Activated CD4-positive, alpha-beta T cell treated with anti-CD3 and anti-CD28 coated beads for 36 hours (primary cell): ENCODE measurements at regions of chr4 and their contacts with region 1.

Region 1: GRCh38 chr4:37977471-37978247 is 17.5 kb downstream of the PTTG2 start:
- DNase-seq: peak; percentile 84
- ATAC-seq: peak; percentile 79
- H3K4me3 Mint-ChIP-seq: peak overlapping the region; percentile 80
- H3K27ac Mint-ChIP-seq: peak overlapping the region; percentile 75
- H3K4me1 Mint-ChIP-seq: peaks cover 42% of the 10 kb centered on the region
- H3K27me3 Mint-ChIP-seq: no peaks in the 10 kb centered on the region

Region 2: DNA sequence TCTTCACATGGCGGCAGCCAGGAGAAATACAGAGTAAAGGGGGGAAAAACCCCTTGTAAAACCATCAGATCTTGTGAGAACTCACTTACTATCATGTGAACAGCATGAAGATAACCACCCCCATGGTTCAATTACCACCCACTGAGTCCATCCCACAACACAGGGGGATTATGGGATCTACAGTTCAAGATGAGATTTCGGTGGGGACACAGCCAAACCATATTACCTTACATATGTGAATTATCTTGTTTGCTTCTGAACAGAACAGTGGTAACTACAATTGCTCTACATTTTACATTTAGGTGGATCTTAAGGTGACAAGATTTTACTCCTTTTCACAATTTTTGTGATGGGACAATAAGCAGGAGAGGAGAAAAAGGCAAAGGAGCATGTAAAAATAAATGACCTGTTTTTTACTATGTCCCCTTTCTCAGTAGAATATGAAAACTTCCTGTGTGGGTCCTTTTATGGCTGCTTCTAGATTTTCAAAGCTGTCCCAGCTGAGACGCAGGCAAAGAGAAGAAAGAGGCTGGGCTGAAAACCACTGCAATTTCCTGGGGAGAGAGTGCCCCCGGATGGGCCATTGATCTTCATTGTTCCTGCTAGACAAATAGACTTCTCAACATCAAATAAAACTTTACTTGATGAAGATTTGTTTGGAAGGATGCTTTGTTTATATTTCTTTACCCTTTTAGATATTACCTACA is 197.1 kb before region 1 on chr4:
- CTCF ChIA-PET with region 1: no interaction called
- POLR2A ChIA-PET with region 1: no interaction called
- intact Hi-C with region 1: no loop called
- DNase-seq: peak; percentile 47
- ATAC-seq: peak; percentile 44
- H3K4me3 Mint-ChIP-seq: no peak overlapping the region
- H3K27ac Mint-ChIP-seq: peak overlapping the region; percentile 53
- H3K4me1 Mint-ChIP-seq: peaks cover 18% of the 10 kb centered on the region
- H3K27me3 Mint-ChIP-seq: no peaks in the 10 kb centered on the region

Region 3: GRCh38 chr4:37826295-37827029 is 151.2 kb before region 1 on chr4 and contains the start of gene PGM2:
- CTCF ChIA-PET with region 1: no interaction called
- POLR2A ChIA-PET with region 1: no interaction called
- intact Hi-C with region 1: loop called (anchors 1 kb)
- DNase-seq: peak; percentile 95
- ATAC-seq: peak; percentile 96
- H3K4me3 Mint-ChIP-seq: peak within 1 kb of the TSS; percentile 97
- H3K27ac Mint-ChIP-seq: peak within 1 kb of the TSS; percentile 93
- H3K4me1 Mint-ChIP-seq: peaks cover 29% of the 10 kb centered on the region
- H3K27me3 Mint-ChIP-seq: no peaks in the 10 kb centered on the region
- total RNA-seq, gene PGM2: 54.1 to 60.1 TPM

Region 4: DNA sequence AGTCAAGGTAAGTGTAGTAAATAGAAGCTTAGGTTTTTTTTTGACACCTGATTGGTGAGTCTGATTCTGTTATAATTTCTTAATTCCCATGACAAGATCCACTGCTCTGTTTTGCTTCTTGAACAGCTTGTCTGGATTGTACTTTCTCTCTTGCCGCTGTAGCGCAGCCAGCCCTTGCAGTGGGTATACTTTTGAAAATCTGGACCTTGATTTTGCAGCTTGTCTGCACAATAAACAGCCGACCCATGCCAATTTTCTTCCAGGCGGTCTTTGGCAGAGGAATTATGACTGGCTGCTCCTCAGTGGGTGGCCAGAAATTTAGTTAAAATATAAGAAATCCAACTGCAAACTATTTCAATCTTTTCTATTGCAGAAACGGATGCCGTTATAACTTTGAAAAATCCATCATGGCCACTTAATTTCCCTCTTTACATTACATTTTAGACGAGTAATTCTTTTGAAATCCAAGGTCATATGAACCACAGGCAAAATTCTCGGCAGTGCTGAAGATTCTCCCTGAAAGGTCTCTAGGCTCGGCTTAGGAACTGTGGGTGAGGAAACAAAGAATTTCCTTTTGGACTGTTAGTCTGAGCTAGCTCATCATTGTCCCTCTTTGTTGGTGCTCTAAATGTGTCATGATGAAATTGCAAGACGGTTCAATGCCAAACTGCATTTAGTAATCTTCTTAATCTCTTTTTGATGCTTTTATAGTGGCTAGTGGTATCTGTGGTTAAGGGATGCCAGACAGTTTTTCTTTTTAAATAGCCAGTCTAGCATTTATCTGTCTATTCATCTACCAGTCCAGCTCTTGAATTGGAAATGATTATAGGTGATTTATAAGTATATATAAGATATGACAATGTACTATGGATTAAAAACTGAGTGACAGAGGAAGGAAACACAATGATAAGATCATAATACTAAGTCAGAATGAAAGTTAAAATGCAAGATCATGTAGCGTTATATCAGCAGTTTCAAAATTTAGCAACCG is 48.9 kb before region 1 on chr4:
- CTCF ChIA-PET with region 1: no interaction called
- POLR2A ChIA-PET with region 1: no interaction called
- intact Hi-C with region 1: loop called in 1 of 2 experiments (anchors 2 kb)
- DNase-seq: no peak
- ATAC-seq: peak; percentile 64
- H3K4me3 Mint-ChIP-seq: no peak overlapping the region
- H3K27ac Mint-ChIP-seq: no peak overlapping the region
- H3K4me1 Mint-ChIP-seq: peaks cover 28% of the 10 kb centered on the region
- H3K27me3 Mint-ChIP-seq: no peaks in the 10 kb centered on the region

Region 5: GRCh38 chr4:38034986-38035882 is 57.6 kb after region 1 on chr4:
- CTCF ChIA-PET with region 1: no interaction called
- POLR2A ChIA-PET with region 1: no interaction called
- intact Hi-C with region 1: loop called in 1 of 2 experiments (anchors 2 kb)
- DNase-seq: peak; percentile 42
- ATAC-seq: no peak
- H3K4me3 Mint-ChIP-seq: no peak overlapping the region
- H3K27ac Mint-ChIP-seq: no peak overlapping the region
- H3K4me1 Mint-ChIP-seq: no peaks in the 10 kb centered on the region
- H3K27me3 Mint-ChIP-seq: no peaks in the 10 kb centered on the region

Region 6: DNA sequence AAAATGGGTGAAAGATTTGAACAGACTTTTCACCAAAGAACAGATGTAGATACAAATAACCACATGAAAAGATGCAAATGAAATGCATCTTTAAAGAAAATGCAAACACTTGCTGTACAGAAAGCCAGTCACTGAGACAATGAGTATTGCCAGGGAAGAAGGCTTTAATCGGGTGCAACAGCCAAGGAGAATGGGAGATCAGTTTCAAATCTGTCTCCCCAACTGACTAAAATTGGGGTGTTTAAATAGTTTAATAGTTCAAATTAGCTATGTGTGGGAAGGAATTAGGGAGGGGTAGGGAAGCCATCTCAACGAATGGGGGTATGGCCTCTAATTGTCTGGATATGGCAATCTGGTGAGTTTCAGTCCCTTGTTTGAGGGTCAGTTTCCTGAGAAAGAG is 277.9 kb after region 1 on chr4:
- CTCF ChIA-PET with region 1: no interaction called
- POLR2A ChIA-PET with region 1: no interaction called
- intact Hi-C with region 1: no loop called
- DNase-seq: no peak
- ATAC-seq: no peak
- H3K4me3 Mint-ChIP-seq: no peak overlapping the region
- H3K27ac Mint-ChIP-seq: no peak overlapping the region
- H3K4me1 Mint-ChIP-seq: no peaks in the 10 kb centered on the region
- H3K27me3 Mint-ChIP-seq: peaks cover 2% of the 10 kb centered on the region